ENCODE measurements at regions of chr18 and their contacts with region 1.

Region 1: GRCh38 chr18:499551-500408 is 721 bp downstream of the COLEC12 start:
- DNase-seq: peak; percentile 82 to 89
- H3K4me3 ChIP-seq: peak overlapping the region; percentile 37
- H3K4me3 Mint-ChIP-seq: peak overlapping the region; percentile 79
- H3K27ac Mint-ChIP-seq: peak overlapping the region; percentile 85
- H3K4me1 ChIP-seq: peaks cover 44% of the 10 kb centered on the region
- H3K4me1 Mint-ChIP-seq: peaks cover 27% of the 10 kb centered on the region
- H3K27me3 ChIP-seq: no peaks in the 10 kb centered on the region
- H3K27me3 Mint-ChIP-seq: no peaks in the 10 kb centered on the region
- CTCF ChIP-seq: peak in 1 of 2 experiments; percentile 8

Region 2: DNA sequence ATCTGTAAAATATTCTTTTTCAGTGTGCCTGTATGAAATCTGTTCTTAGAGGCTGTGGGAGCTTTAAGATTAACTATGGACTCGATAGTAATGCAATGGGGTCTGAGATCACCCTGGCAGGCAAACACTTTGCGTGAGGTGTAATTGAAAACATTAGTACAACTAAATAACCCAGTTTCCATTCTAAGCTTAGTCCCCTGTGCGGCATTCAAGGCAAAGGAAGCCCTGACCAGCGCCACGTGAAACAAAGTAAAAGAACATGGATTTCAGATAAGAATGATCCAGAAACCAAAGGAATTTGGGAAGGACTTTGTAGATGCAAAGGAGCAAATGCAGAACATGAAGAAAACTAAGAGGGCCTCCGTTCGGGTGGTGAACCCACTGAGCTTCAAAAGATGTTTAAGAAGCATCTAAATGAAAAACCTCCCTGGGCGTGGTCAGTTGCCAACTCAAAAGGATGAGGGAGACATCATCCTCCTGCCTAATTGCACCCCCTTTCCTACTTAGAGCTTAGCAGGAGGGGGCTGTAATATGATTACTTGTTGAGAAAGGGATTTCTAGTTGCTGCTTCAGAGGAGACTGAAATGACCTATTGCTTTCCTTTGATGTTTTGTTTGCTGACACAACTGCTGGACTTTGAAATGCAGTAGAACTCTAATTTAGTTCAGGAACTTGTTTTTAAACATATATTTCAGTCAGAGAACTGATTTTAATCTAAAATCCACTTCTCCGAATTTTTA is 72.5 kb after region 1 on chr18:
- CTCF ChIA-PET with region 1: no interaction called
- POLR2A ChIA-PET with region 1: no interaction called
- intact Hi-C with region 1: loop called (anchors 2 kb)
- DNase-seq: peak in 1 of 2 experiments; percentile 36
- H3K4me3 ChIP-seq: no peak overlapping the region
- H3K4me3 Mint-ChIP-seq: no peak overlapping the region
- H3K27ac Mint-ChIP-seq: peak overlapping the region; percentile 90
- H3K4me1 ChIP-seq: peaks cover 37% of the 10 kb centered on the region
- H3K4me1 Mint-ChIP-seq: peaks cover 24% of the 10 kb centered on the region
- H3K27me3 ChIP-seq: no peaks in the 10 kb centered on the region
- H3K27me3 Mint-ChIP-seq: no peaks in the 10 kb centered on the region
- CTCF ChIP-seq: no peak

Region 3: GRCh38 chr18:616380-616995 is 116.7 kb after region 1 on chr18:
- CTCF ChIA-PET with region 1: interaction called, 4 read pairs
- POLR2A ChIA-PET with region 1: no interaction called
- intact Hi-C with region 1: loop called (anchors 5 kb)
- DNase-seq: peak in 1 of 2 experiments; percentile 26
- H3K4me3 ChIP-seq: no peak overlapping the region
- H3K4me3 Mint-ChIP-seq: no peak overlapping the region
- H3K27ac Mint-ChIP-seq: no peak overlapping the region
- H3K4me1 ChIP-seq: no peaks in the 10 kb centered on the region
- H3K4me1 Mint-ChIP-seq: no peaks in the 10 kb centered on the region
- H3K27me3 ChIP-seq: no peaks in the 10 kb centered on the region
- H3K27me3 Mint-ChIP-seq: peaks cover 2% of the 10 kb centered on the region
- CTCF ChIP-seq: peak; percentile 65 to 67

Measured in Caco-2 (cell line).